PC-3 (cell line): ENCODE measurements at regions of chr7 and their contacts with region 1.

Region 1: GRCh38 chr7:149028346-149029109 is at the start of gene PDIA4:
- DNase-seq: peak; percentile 98
- ATAC-seq: peak; percentile 92
- H3K4me3 ChIP-seq: peak within 1 kb of the TSS; percentile 82
- H3K27ac ChIP-seq: peak within 1 kb of the TSS; percentile 70
- H3K4me1 ChIP-seq: peaks cover 12% of the 10 kb centered on the region
- H3K27me3 ChIP-seq: no peaks in the 10 kb centered on the region
- CTCF ChIP-seq: no peak
- total RNA-seq, gene PDIA4: 249 and 253 TPM in 2 replicates

Region 2: GRCh38 chr7:148735141-148735540 is 293.4 kb before region 1 on chr7:
- CTCF ChIA-PET with region 1: no interaction called
- POLR2A ChIA-PET with region 1: interaction called, 30 read pairs
- intact Hi-C with region 1: no loop called
- DNase-seq: no peak
- ATAC-seq: no peak
- H3K4me3 ChIP-seq: no peak overlapping the region
- H3K27ac ChIP-seq: no peak overlapping the region
- H3K4me1 ChIP-seq: peaks cover 6% of the 10 kb centered on the region
- H3K27me3 ChIP-seq: no peaks in the 10 kb centered on the region
- CTCF ChIP-seq: no peak

Region 3: GRCh38 chr7:148987010-148987750 is 41.3 kb before region 1 on chr7:
- CTCF ChIA-PET with region 1: no interaction called
- POLR2A ChIA-PET with region 1: interaction called, 3 read pairs
- intact Hi-C with region 1: loop called (anchors 1 kb)
- DNase-seq: peak; percentile 89
- ATAC-seq: peak; percentile 85
- H3K4me3 ChIP-seq: peak overlapping the region; percentile 81
- H3K27ac ChIP-seq: peak overlapping the region; percentile 51
- H3K4me1 ChIP-seq: peaks cover 24% of the 10 kb centered on the region
- H3K27me3 ChIP-seq: no peaks in the 10 kb centered on the region
- CTCF ChIP-seq: no peak

Region 4: GRCh38 chr7:149071641-149072437 is 43.3 kb after region 1 on chr7:
- CTCF ChIA-PET with region 1: no interaction called
- POLR2A ChIA-PET with region 1: no interaction called
- intact Hi-C with region 1: no loop called
- DNase-seq: no peak
- ATAC-seq: no peak
- H3K4me3 ChIP-seq: no peak overlapping the region
- H3K27ac ChIP-seq: no peak overlapping the region
- H3K4me1 ChIP-seq: no peaks in the 10 kb centered on the region
- H3K27me3 ChIP-seq: no peaks in the 10 kb centered on the region
- CTCF ChIP-seq: no peak

Region 5: DNA sequence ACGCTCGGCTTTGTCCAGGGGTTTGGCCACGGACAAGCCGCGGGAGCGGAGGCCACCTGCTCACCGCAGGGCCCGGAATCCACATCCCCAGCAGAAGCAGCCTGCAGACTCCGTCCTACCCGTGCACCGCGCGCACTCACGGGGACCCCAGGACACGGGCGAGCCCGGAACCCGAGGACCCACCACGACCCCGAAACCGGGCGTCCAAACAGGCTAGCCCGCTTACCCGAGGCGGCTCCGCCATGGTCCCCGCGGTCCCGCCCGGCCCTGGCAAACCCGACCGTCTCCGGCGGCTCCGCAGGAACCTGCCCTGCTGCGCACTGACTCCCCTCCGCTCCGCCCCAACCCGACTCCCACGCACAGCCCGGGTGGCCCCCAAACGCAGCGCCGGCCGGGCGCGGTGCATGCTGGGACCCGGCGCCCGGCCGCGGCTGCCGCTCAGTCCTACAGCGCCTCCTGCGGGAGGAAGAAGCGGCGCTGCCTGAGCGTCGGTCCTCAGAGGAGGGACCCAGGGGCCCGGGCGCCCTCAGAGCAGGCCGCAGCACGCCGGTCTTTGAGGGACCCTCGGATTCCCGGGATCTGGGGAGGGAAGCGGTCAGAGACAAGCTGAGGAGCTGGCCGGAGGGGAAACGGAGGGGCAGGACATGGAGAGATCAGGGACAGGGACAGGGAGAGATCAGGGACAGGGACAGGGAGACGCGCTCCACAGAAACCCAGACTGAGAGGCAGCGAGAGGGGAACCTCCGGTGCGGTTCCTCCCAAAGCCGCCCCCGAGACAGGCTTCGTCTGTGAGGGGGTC is 62.1 kb after region 1 on chr7 and contains the start of gene ZNF786:
- CTCF ChIA-PET with region 1: no interaction called
- POLR2A ChIA-PET with region 1: no interaction called
- intact Hi-C with region 1: loop called (anchors 1 kb)
- DNase-seq: peak; percentile 90
- ATAC-seq: peak; percentile 85
- H3K4me3 ChIP-seq: peak within 1 kb of the TSS; percentile 97
- H3K27ac ChIP-seq: peak within 1 kb of the TSS; percentile 69
- H3K4me1 ChIP-seq: no peaks in the 10 kb centered on the region
- H3K27me3 ChIP-seq: no peaks in the 10 kb centered on the region
- CTCF ChIP-seq: peak; percentile 80
- total RNA-seq, gene ZNF786: 4.2 and 6.3 TPM in 2 replicates

Region 6: GRCh38 chr7:149125863-149126661 is 97.5 kb after region 1 on chr7 and contains the start of gene ZNF425:
- CTCF ChIA-PET with region 1: no interaction called
- POLR2A ChIA-PET with region 1: no interaction called
- intact Hi-C with region 1: loop called (anchors 2 kb)
- DNase-seq: peak; percentile 94
- ATAC-seq: peak; percentile 83
- H3K4me3 ChIP-seq: peak within 1 kb of the TSS; percentile 100
- H3K27ac ChIP-seq: peak within 1 kb of the TSS; percentile 57
- H3K4me1 ChIP-seq: peaks cover 5% of the 10 kb centered on the region
- H3K27me3 ChIP-seq: no peaks in the 10 kb centered on the region
- CTCF ChIP-seq: peak; percentile 82
- total RNA-seq, gene ZNF425: 1.6 and 2.0 TPM in 2 replicates